PC-9 (cell line): ENCODE measurements at regions of chr3 and their contacts with region 1.

Region 1: GRCh38 chr3:177359593-177360357 is 162.5 kb upstream of the TBL1XR1 start:
- DNase-seq: peak; percentile 98
- H3K4me3 ChIP-seq: peak overlapping the region; percentile 49
- H3K27ac ChIP-seq: peak overlapping the region; percentile 96
- H3K4me1 ChIP-seq: peaks cover 70% of the 10 kb centered on the region
- H3K27me3 ChIP-seq: no peaks in the 10 kb centered on the region
- CTCF ChIP-seq: no peak

Region 2: GRCh38 chr3:177284383-177284881 is 75.3 kb before region 1 on chr3:
- CTCF ChIA-PET with region 1: no interaction called
- POLR2A ChIA-PET with region 1: interaction called, 3 read pairs
- intact Hi-C with region 1: loop called (anchors 1 kb)
- DNase-seq: no peak
- H3K4me3 ChIP-seq: no peak overlapping the region
- H3K27ac ChIP-seq: no peak overlapping the region
- H3K4me1 ChIP-seq: peaks cover 59% of the 10 kb centered on the region
- H3K27me3 ChIP-seq: no peaks in the 10 kb centered on the region
- CTCF ChIP-seq: no peak

Region 3: GRCh38 chr3:177448987-177449975 is 89.5 kb after region 1 on chr3:
- CTCF ChIA-PET with region 1: no interaction called
- POLR2A ChIA-PET with region 1: interaction called, 4 read pairs
- intact Hi-C with region 1: loop called (anchors 1 kb)
- DNase-seq: peak; percentile 82 to 99
- H3K4me3 ChIP-seq: peak overlapping the region; percentile 9; the same call in 1 of the 2 replicates
- H3K27ac ChIP-seq: peak overlapping the region; percentile 89
- H3K4me1 ChIP-seq: peaks cover 66% of the 10 kb centered on the region
- H3K27me3 ChIP-seq: no peaks in the 10 kb centered on the region
- CTCF ChIP-seq: no peak

Region 4: GRCh38 chr3:177665122-177665808 is 305.5 kb after region 1 on chr3:
- CTCF ChIA-PET with region 1: no interaction called
- POLR2A ChIA-PET with region 1: no interaction called
- intact Hi-C with region 1: loop called (anchors 5 kb)
- DNase-seq: no peak
- H3K4me3 ChIP-seq: no peak overlapping the region
- H3K27ac ChIP-seq: no peak overlapping the region
- H3K4me1 ChIP-seq: no peaks in the 10 kb centered on the region
- H3K27me3 ChIP-seq: no peaks in the 10 kb centered on the region
- CTCF ChIP-seq: no peak

Region 5: DNA sequence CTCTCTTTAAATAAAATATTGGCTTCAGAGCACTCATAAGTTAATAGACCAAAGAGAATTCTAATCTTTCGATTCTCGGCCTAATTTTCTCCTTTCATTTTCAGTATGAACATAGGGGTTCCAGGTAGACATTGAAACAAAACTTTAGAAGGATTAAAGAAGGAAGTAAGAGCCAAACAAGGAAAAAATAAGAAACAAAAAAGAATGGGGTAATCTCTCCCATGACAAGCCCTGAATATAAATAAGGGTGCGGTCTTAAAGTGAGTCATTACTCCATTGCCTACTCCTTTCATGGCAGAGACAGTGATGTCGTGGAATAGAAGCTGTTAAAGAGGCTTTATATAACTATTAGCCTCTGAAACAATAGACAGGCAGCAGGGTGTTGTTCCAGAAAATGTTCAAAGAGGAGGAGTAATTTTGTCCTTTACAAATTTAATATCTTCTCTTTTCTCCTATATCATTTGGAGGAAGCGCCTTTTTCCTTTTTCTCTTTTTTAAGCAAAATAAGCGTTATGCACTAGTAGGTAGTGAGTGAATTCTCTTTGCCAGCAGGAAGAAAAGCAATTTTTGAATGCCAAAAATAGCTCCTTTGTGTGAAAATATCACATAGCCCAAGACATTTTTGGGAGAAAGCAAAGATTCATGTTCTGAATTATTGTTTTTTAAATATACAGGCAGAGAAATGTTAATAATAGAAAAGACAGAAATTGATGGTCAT is 568.5 kb after region 1 on chr3:
- CTCF ChIA-PET with region 1: no interaction called
- POLR2A ChIA-PET with region 1: no interaction called
- intact Hi-C with region 1: loop called (anchors 10 kb)
- DNase-seq: peak in 1 of 2 experiments; percentile 81
- H3K4me3 ChIP-seq: no peak overlapping the region
- H3K27ac ChIP-seq: peak overlapping the region; percentile 59
- H3K4me1 ChIP-seq: peaks cover 22% of the 10 kb centered on the region
- H3K27me3 ChIP-seq: no peaks in the 10 kb centered on the region
- CTCF ChIP-seq: no peak

Region 6: GRCh38 chr3:178385280-178385952 is 1025.6 kb after region 1 on chr3:
- CTCF ChIA-PET with region 1: no interaction called
- POLR2A ChIA-PET with region 1: interaction called, 4 read pairs
- intact Hi-C with region 1: loop called (anchors 1 kb)
- DNase-seq: peak in 1 of 2 experiments; percentile 31
- H3K4me3 ChIP-seq: no peak overlapping the region
- H3K27ac ChIP-seq: no peak overlapping the region
- H3K4me1 ChIP-seq: peaks cover 26% of the 10 kb centered on the region
- H3K27me3 ChIP-seq: no peaks in the 10 kb centered on the region
- CTCF ChIP-seq: peak; percentile 98